Heart right ventricle (tissue), 16 donors: ENCODE measurements at regions of chr3 and their contacts with region 1.

Region 1: GRCh38 chr3:184320099-184320445 is 5.7 kb downstream of the EIF4G1 start:
- DNase-seq: peak; percentile 96
- ATAC-seq: peak; percentile 87 to 94 (median 92)
- H3K4me3 ChIP-seq: peak overlapping the region in 9 of 10 donors; percentile 18 to 47 (median 37)
- H3K27ac ChIP-seq: peak overlapping the region; percentile 46 to 92 (median 88)
- H3K4me1 ChIP-seq: peaks cover 22 to 83% (median 64%) of the 10 kb centered on the region in 9 donors
- H3K27me3 ChIP-seq: no peaks in the 10 kb centered on the region
- CTCF ChIP-seq: peak in 1 of 9 donors; percentile 5

Region 2: DNA sequence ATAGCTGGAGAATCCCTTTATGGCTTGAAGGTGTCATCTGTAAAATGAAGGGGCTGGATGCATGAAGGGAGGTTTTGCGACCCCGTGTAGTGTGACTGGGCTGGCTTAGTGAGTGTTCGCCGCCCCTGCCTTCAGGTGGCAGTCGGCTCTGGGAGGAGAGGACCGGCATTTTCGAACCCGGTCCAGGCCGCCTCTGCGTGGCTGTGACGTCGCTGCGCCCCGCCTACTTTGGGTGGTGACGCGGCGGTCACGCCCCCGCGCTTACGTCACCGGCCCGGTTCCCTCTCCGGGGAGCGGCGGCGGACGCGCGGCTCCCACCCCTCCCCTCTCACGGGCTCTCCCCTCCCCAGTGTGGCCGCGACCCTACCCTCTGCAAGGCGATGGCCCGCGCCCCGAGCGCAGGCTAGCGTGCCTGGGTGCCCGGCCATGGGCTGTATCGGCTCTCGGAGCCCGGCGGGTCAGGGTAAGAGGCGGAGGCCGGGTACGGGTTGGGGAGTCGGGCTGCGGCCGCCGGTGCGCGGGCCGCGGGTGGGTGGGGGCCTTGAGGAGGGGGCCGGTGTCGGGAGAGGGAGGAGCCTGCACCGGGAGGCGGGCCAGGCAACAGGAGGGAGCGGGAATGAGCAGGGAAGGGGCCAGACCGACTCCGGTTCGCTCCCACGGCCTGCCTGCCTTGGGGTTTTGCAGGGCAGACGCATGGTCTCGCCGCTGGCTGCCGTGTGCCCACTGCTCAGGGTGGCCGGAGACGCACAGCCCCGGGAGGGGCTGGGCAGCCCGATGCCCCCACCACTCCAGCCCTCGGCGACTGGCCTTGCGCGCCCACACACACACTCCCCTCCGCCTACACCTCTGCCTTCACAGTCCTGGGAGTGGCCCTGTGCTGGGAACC is 15.8 kb after region 1 on chr3:
- intact Hi-C with region 1: loop called in 3 of 10 experiments (anchors 1 to 2 kb)
- DNase-seq: peak; percentile 88 to 91
- ATAC-seq: peak; percentile 63 to 75 (median 68)
- H3K4me3 ChIP-seq: peak overlapping the region; percentile 51 to 96 (median 82)
- H3K27ac ChIP-seq: peak overlapping the region; percentile 81 to 99 (median 96)
- H3K4me1 ChIP-seq: peaks cover 18 to 65% (median 45%) of the 10 kb centered on the region in 9 donors
- H3K27me3 ChIP-seq: no peaks in the 10 kb centered on the region
- CTCF ChIP-seq: no peak